ENCODE measurements at regions of chr6 and their contacts with region 1.

Region 1: GRCh38 chr6:70547313-70547712 is 19.4 kb upstream of the SDHAF4 start:
- DNase-seq: no peak
- ATAC-seq: no peak
- H3K4me3 ChIP-seq: no peak overlapping the region
- H3K27ac ChIP-seq: no peak overlapping the region
- H3K4me1 ChIP-seq: no peaks in the 10 kb centered on the region
- H3K27me3 ChIP-seq: no peaks in the 10 kb centered on the region
- CTCF ChIP-seq: peak; percentile 21

Region 2: GRCh38 chr6:70436320-70436719 is 111.0 kb before region 1 on chr6:
- intact Hi-C with region 1: no loop called
- DNase-seq: no peak
- ATAC-seq: no peak
- H3K4me3 ChIP-seq: no peak overlapping the region
- H3K27ac ChIP-seq: no peak overlapping the region
- H3K4me1 ChIP-seq: no peaks in the 10 kb centered on the region
- H3K27me3 ChIP-seq: no peaks in the 10 kb centered on the region
- CTCF ChIP-seq: no peak

Region 3: GRCh38 chr6:70633870-70634269 is 86.6 kb after region 1 on chr6:
- intact Hi-C with region 1: no loop called
- DNase-seq: no peak
- ATAC-seq: no peak
- H3K4me3 ChIP-seq: no peak overlapping the region
- H3K27ac ChIP-seq: no peak overlapping the region
- H3K4me1 ChIP-seq: no peaks in the 10 kb centered on the region
- H3K27me3 ChIP-seq: no peaks in the 10 kb centered on the region
- CTCF ChIP-seq: no peak

Region 4: GRCh38 chr6:70686548-70687133 is 139.3 kb after region 1 on chr6:
- intact Hi-C with region 1: loop called (anchors 10 kb)
- DNase-seq: no peak
- ATAC-seq: peak; percentile 65 to 78
- H3K4me3 ChIP-seq: no peak overlapping the region
- H3K27ac ChIP-seq: no peak overlapping the region
- H3K4me1 ChIP-seq: peaks cover 31% of the 10 kb centered on the region
- H3K27me3 ChIP-seq: no peaks in the 10 kb centered on the region
- CTCF ChIP-seq: peak; percentile 83